Activated CD4-positive, alpha-beta memory T cell treated with anti-CD3 and anti-CD28 coated beads for 36 hours (primary cell): ENCODE measurements at regions of chr2 and their contacts with region 1.

Region 1: GRCh38 chr2:201151127-201151981 is 31.6 kb upstream of the CASP10 start:
- DNase-seq: no peak
- H3K4me3 Mint-ChIP-seq: peak overlapping the region; percentile 25
- H3K27ac Mint-ChIP-seq: peak overlapping the region; percentile 81
- H3K4me1 Mint-ChIP-seq: peaks cover 43% of the 10 kb centered on the region
- H3K27me3 Mint-ChIP-seq: no peaks in the 10 kb centered on the region

Region 2: DNA sequence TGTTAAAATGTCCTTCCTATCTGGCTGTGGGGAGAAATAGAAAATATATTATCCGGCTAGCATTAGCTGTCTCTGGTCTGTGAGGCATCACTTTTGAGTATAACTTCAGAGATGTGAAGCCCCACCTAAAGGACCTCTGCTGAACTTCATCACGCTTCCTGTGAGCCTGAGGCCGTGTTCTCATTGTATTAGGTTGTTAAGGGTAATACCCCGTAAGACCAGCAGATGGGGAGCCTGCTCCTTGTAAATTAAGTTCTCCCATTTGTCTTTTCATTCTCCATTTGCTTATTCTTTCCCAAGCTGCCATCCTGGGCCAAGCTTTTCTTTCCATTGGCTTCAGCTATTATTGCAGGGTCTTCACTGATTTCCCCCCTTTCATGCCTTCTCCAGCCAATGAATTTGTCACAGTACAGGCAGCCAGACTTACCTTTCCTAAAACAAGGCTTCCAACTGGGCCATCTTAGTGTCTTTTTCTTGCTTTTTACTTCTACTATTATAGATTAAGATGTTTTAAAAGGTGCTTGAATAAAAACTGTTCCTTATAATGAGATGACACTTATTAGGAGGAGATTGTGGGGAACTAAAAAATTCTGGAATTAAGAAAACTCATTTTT is 249.8 kb before region 1 on chr2:
- CTCF ChIA-PET with region 1: no interaction called
- POLR2A ChIA-PET with region 1: no interaction called
- intact Hi-C with region 1: no loop called
- DNase-seq: peak; percentile 79
- H3K4me3 Mint-ChIP-seq: no peak overlapping the region
- H3K27ac Mint-ChIP-seq: peak overlapping the region; percentile 69
- H3K4me1 Mint-ChIP-seq: peaks cover 9% of the 10 kb centered on the region
- H3K27me3 Mint-ChIP-seq: no peaks in the 10 kb centered on the region

Region 3: GRCh38 chr2:200913654-200914053 is 237.7 kb before region 1 on chr2:
- CTCF ChIA-PET with region 1: no interaction called
- POLR2A ChIA-PET with region 1: no interaction called
- intact Hi-C with region 1: no loop called
- DNase-seq: no peak
- H3K4me3 Mint-ChIP-seq: no peak overlapping the region
- H3K27ac Mint-ChIP-seq: no peak overlapping the region
- H3K4me1 Mint-ChIP-seq: peaks cover 2% of the 10 kb centered on the region
- H3K27me3 Mint-ChIP-seq: no peaks in the 10 kb centered on the region

Region 4: DNA sequence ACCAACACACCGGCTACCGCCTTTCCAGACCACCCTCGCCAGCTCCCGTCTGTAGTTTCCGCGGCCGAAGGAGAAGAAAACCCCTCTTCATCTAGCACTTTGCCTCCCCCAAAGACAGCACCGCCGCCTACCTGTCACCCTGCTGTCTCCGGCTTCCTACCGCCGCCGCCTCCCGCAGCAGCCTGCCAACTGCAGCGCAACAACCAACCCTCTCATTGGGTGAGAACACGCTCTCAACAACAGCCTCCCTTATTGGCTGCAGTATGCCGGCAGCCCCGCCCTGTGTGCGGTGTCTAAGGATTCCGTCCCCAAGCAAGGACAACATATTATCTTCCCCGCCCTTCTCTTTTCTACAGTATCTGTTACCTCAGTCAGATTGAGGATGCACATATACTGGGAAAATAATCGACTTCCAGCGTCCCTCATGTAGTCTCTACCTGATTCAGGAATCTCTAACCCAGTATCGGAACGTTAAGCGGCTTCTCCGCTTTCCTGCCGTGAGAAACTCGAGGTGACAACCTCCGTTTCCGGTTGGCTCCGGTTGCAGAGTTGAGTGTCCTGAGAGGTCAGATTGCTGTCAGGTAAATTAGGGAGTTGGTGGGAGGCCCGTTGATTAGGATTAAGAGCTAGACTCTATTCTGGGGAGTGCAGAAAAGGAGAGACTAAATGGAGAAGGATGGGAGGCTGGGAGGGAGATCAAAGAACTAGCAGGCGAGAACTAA is 79.7 kb before region 1 on chr2 and contains the starts of genes HYCC2 and NDUFB3:
- CTCF ChIA-PET with region 1: no interaction called
- POLR2A ChIA-PET with region 1: no interaction called
- intact Hi-C with region 1: no loop called
- DNase-seq: peak; percentile 95
- H3K4me3 Mint-ChIP-seq: peak within 1 kb of the TSS; percentile 91
- H3K27ac Mint-ChIP-seq: peak within 1 kb of the TSS; percentile 86
- H3K4me1 Mint-ChIP-seq: peaks cover 52% of the 10 kb centered on the region
- H3K27me3 Mint-ChIP-seq: no peaks in the 10 kb centered on the region
- total RNA-seq, gene HYCC2: 18.9 to 20.5 TPM
- total RNA-seq, gene NDUFB3: 158 to 162 TPM

Region 5: GRCh38 chr2:201130524-201131186 is 20.7 kb before region 1 on chr2:
- CTCF ChIA-PET with region 1: no interaction called
- POLR2A ChIA-PET with region 1: interaction called, 6 read pairs
- intact Hi-C with region 1: loop called (anchors 1 kb)
- DNase-seq: peak; percentile 55
- H3K4me3 Mint-ChIP-seq: peak overlapping the region; percentile 92
- H3K27ac Mint-ChIP-seq: peak overlapping the region; percentile 94
- H3K4me1 Mint-ChIP-seq: peaks cover 54% of the 10 kb centered on the region
- H3K27me3 Mint-ChIP-seq: no peaks in the 10 kb centered on the region

Region 6: DNA sequence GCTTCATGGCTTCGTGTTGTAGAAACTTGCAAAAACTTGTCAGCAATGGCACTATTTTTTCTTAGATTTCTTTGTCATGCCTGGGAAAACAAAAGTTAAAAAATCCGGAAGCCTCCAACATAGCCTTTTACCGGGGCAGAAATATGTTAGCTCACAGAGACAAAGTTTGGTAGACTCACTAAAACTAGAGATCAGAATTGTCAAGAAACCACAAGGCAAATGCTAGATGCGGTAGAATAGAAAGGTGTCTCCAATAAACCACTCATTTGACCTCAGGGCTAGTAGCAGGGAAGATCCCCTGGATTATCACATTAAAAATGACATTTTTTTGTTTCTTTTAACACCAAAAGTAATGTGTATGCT is 32.0 kb after region 1 on chr2:
- CTCF ChIA-PET with region 1: no interaction called
- POLR2A ChIA-PET with region 1: no interaction called
- intact Hi-C with region 1: no loop called
- DNase-seq: no peak
- H3K4me3 Mint-ChIP-seq: peak overlapping the region; percentile 85
- H3K27ac Mint-ChIP-seq: peak overlapping the region; percentile 90
- H3K4me1 Mint-ChIP-seq: peaks cover 62% of the 10 kb centered on the region
- H3K27me3 Mint-ChIP-seq: no peaks in the 10 kb centered on the region